ENCODE measurements at regions of chr14 and their contacts with region 1.

Region 1: GRCh38 chr14:50714450-50715073 is 46.5 kb upstream of the SAV1 start:
- DNase-seq: peak in 1 of 2 donors; percentile 46
- ATAC-seq: peak in 2 of 3 donors; percentile 47 to 61
- H3K4me3 ChIP-seq: no peak overlapping the region
- H3K4me3 Mint-ChIP-seq: no peak overlapping the region
- H3K27ac ChIP-seq: no peak overlapping the region
- H3K27ac Mint-ChIP-seq: no peak overlapping the region
- H3K4me1 ChIP-seq: no peaks in the 10 kb centered on the region
- H3K4me1 Mint-ChIP-seq: no peaks in the 10 kb centered on the region
- H3K27me3 ChIP-seq: no peaks in the 10 kb centered on the region
- H3K27me3 Mint-ChIP-seq: peaks cover 0 to 4% of the 10 kb centered on the region in 2 donors
- CTCF ChIP-seq: peak; percentile 27

Region 2: DNA sequence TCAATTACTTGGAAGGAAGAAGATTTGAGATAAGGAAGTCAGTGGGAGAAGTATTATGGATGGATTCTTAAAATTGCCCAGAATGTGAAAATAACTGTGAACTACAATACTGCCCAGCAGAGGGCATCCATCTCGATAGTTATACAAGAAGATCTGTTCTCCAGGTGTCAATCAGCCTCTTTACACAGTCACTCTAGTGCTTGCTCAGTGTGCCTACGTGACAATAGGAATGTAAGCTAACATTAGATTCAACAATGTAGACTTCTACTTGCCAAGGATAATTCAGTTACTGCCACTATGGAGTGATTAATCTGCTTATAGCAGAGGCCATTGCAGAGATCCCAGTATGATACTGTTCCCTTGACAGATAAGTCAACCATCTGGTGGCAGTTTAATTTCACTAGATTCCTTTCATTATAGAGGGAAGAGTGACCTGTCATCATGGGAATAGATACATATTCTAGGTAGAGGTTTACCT is 171.6 kb before region 1 on chr14:
- intact Hi-C with region 1: loop called (anchors 2 kb)
- DNase-seq: peak in 1 of 2 donors; percentile 72
- ATAC-seq: peak; percentile 58 to 89 (median 78)
- H3K4me3 ChIP-seq: no peak overlapping the region
- H3K4me3 Mint-ChIP-seq: no peak overlapping the region
- H3K27ac ChIP-seq: no peak overlapping the region
- H3K27ac Mint-ChIP-seq: no peak overlapping the region
- H3K4me1 ChIP-seq: peaks cover 3% of the 10 kb centered on the region
- H3K4me1 Mint-ChIP-seq: peaks cover 8 to 11% of the 10 kb centered on the region in 2 donors
- H3K27me3 ChIP-seq: no peaks in the 10 kb centered on the region
- H3K27me3 Mint-ChIP-seq: peaks cover 0 to 9% of the 10 kb centered on the region in 2 donors
- CTCF ChIP-seq: peak; percentile 70

Region 3: GRCh38 chr14:50560931-50561285 is 153.7 kb before region 1 on chr14:
- intact Hi-C with region 1: no loop called
- DNase-seq: peak; percentile 20 to 53
- ATAC-seq: peak; percentile 61 to 69 (median 63)
- H3K4me3 ChIP-seq: peak overlapping the region; percentile 55
- H3K4me3 Mint-ChIP-seq: peak overlapping the region; percentile 86
- H3K27ac ChIP-seq: no peak overlapping the region
- H3K27ac Mint-ChIP-seq: no peak overlapping the region
- H3K4me1 ChIP-seq: peaks cover 14% of the 10 kb centered on the region
- H3K4me1 Mint-ChIP-seq: peaks cover 13 to 14% of the 10 kb centered on the region in 2 donors
- H3K27me3 ChIP-seq: peaks cover 29% of the 10 kb centered on the region
- H3K27me3 Mint-ChIP-seq: peaks cover 33 to 76% of the 10 kb centered on the region in 2 donors
- CTCF ChIP-seq: no peak